ENCODE measurements at regions of chr11 and their contacts with region 1.

Region 1: GRCh38 chr11:43852057-43852636 is 28.5 kb upstream of the ALKBH3 start:
- DNase-seq: no peak
- H3K4me3 ChIP-seq: no peak overlapping the region
- H3K27ac ChIP-seq: no peak overlapping the region
- H3K4me1 ChIP-seq: no peaks in the 10 kb centered on the region
- H3K27me3 ChIP-seq: no peaks in the 10 kb centered on the region
- CTCF ChIP-seq: peak in 2 of 3 donors; percentile 44 to 53
- POLR2A ChIP-seq: no peak

Region 2: DNA sequence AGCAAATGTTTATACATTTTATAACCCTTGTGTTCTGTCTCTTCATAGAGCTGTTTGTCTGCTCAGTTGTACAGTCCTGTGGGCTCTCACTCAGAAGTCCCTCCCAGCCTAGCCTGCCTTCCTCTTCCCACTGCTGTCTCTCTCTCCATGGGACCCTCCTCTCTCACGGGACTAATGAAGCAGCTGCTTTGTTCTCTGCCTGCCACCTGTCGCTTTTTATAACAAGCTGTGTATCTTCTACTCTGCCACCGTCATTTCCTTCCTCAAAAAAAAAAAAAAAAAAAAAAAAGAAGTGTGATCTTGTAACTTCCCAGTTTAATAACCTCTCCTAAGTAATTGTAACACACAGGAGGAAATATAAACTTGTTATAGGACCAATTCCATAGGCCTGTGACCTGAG is 63.7 kb before region 1 on chr11:
- intact Hi-C with region 1: no loop called
- DNase-seq: no peak
- H3K4me3 ChIP-seq: no peak overlapping the region
- H3K27ac ChIP-seq: no peak overlapping the region
- H3K4me1 ChIP-seq: no peaks in the 10 kb centered on the region
- H3K27me3 ChIP-seq: no peaks in the 10 kb centered on the region
- CTCF ChIP-seq: no peak
- POLR2A ChIP-seq: no peak

Region 3: GRCh38 chr11:43992834-43993637 is 140.9 kb after region 1 on chr11:
- intact Hi-C with region 1: loop called (anchors 5 kb)
- DNase-seq: no peak
- H3K4me3 ChIP-seq: peak overlapping the region in 1 of 3 donors; percentile 19
- H3K27ac ChIP-seq: no peak overlapping the region
- H3K4me1 ChIP-seq: no peaks in the 10 kb centered on the region
- H3K27me3 ChIP-seq: no peaks in the 10 kb centered on the region
- CTCF ChIP-seq: no peak
- POLR2A ChIP-seq: no peak